CD4-positive, alpha-beta memory T cell (primary cell): ENCODE measurements at regions of chr2 and their contacts with region 1.

Region 1: DNA sequence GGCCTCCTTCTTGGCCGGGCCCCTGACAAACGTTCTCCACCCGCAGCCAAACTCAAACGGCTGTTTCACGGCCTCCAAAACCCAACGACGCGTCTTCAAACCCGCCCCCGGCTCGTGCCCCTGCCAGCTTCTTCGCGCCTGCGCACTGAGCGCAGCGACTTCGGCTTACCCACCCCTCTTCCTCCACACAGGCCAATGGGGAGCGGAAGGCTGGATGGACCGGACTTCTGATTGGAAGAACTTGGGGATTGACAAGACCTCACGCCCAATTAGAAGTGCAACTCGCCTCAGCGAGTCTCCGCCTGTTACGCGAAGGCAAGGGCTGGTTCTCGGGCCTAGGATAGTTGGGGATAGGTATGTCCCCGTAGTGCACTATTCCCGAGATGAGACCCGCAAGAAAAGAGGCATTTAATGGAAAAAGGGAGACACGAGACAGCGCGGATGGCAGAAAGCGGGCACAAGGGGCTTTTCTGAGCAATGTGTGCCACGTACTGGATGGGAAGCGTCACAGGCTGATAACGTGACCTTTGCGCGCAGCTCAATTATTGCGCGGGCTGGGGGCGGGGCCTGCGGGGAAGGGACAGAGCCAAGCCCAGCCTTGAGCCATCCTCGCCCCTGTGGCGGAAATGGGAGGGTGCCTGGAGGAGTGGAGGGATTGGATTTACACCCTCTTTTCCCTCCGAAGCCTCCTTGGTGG is at the start of gene LAPTM4A:
- DNase-seq: peak; percentile 97 to 99 (median 99)
- H3K4me3 ChIP-seq: peak within 1 kb of the TSS; percentile 76 to 90
- H3K4me3 Mint-ChIP-seq: no peak within 1 kb of the TSS
- H3K27ac ChIP-seq: peak within 1 kb of the TSS; percentile 94
- H3K27ac Mint-ChIP-seq: no peak within 1 kb of the TSS
- H3K4me1 ChIP-seq: peaks cover 35% of the 10 kb centered on the region
- H3K4me1 Mint-ChIP-seq: peaks cover 23 to 32% (median 26%) of the 10 kb centered on the region in 4 donors
- H3K27me3 ChIP-seq: peaks cover 8% of the 10 kb centered on the region
- H3K27me3 Mint-ChIP-seq: peaks cover 13 to 15% of the 10 kb centered on the region in 2 donors
- total RNA-seq, gene LAPTM4A: 47.4 to 50.8 TPM

Region 2: GRCh38 chr2:19863303-19864041 is 188.2 kb before region 1 on chr2:
- CTCF ChIA-PET with region 1: no interaction called
- POLR2A ChIA-PET with region 1: interaction called, 6 read pairs
- intact Hi-C with region 1: loop called (anchors 10 kb)
- DNase-seq: peak; percentile 58 to 70 (median 61)
- H3K4me3 ChIP-seq: no peak overlapping the region
- H3K4me3 Mint-ChIP-seq: no peak overlapping the region
- H3K27ac ChIP-seq: no peak overlapping the region
- H3K27ac Mint-ChIP-seq: peak overlapping the region in 1 of 7 donors; percentile 67
- H3K4me1 ChIP-seq: peaks cover 13% of the 10 kb centered on the region
- H3K4me1 Mint-ChIP-seq: peaks cover 4 to 18% (median 8%) of the 10 kb centered on the region in 4 donors
- H3K27me3 ChIP-seq: no peaks in the 10 kb centered on the region
- H3K27me3 Mint-ChIP-seq: peaks cover 1 to 5% of the 10 kb centered on the region in 2 donors

Region 3: DNA sequence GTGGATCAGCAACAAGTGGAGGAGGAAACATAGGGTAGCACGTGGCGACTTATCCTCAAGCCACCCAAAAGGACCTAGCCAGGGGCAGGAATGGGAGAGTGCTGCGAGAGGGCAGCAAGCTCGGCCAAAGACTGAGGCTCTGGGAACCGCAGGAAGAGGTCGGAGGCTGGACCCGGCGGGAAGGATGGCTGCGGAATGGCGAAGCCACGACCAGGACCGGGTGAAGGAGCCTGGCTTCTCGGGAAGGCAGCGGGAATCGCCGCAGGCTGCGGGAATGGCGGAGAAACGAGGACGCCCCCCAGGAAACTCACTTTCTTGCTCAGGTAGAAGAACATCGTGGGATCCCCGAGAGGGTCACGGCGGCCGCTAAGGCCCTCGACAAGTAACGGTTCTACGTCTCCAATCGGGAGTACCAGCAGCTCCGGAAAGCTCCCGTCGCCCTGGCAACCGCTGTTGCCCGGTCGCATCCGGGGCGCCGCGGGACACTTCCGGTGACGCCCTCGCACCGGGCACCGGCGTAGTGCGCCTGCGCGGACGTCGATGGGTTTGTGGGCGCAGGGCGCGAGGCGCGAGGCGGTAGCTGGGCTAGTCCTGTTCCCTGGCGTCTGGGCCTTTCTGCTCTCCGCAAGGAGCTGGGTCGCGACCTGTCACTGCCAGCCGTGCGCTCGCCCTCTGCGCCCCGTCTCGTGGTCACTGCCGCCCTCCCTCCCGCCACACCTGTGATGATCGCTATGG is 61.8 kb before region 1 on chr2 and contains the start of gene WDR35:
- CTCF ChIA-PET with region 1: interaction called, 5 read pairs
- POLR2A ChIA-PET with region 1: interaction called, 19 read pairs
- intact Hi-C with region 1: loop called (anchors 1 kb)
- DNase-seq: peak; percentile 80 to 89 (median 86)
- H3K4me3 ChIP-seq: peak within 1 kb of the TSS; percentile 57 to 68
- H3K4me3 Mint-ChIP-seq: peak within 1 kb of the TSS; percentile 86 to 96 (median 90)
- H3K27ac ChIP-seq: peak within 1 kb of the TSS; percentile 57
- H3K27ac Mint-ChIP-seq: peak within 1 kb of the TSS; percentile 77 to 95 (median 93)
- H3K4me1 ChIP-seq: peaks cover 16% of the 10 kb centered on the region
- H3K4me1 Mint-ChIP-seq: peaks cover 11 to 28% (median 21%) of the 10 kb centered on the region in 4 donors
- H3K27me3 ChIP-seq: no peaks in the 10 kb centered on the region
- H3K27me3 Mint-ChIP-seq: peaks cover 9 to 11% of the 10 kb centered on the region in 2 donors
- total RNA-seq, gene WDR35: 5.5 to 5.7 TPM

Region 4: GRCh38 chr2:20097879-20098714 is 46.4 kb after region 1 on chr2:
- CTCF ChIA-PET with region 1: no interaction called
- POLR2A ChIA-PET with region 1: no interaction called
- intact Hi-C with region 1: loop called (anchors 2 kb)
- DNase-seq: peak; percentile 65 to 72 (median 70)
- H3K4me3 ChIP-seq: no peak overlapping the region
- H3K4me3 Mint-ChIP-seq: no peak overlapping the region
- H3K27ac ChIP-seq: no peak overlapping the region
- H3K27ac Mint-ChIP-seq: peak overlapping the region in 1 of 7 donors; percentile 28
- H3K4me1 ChIP-seq: no peaks in the 10 kb centered on the region
- H3K4me1 Mint-ChIP-seq: peaks cover 0 to 4% (median 0%) of the 10 kb centered on the region in 4 donors
- H3K27me3 ChIP-seq: no peaks in the 10 kb centered on the region
- H3K27me3 Mint-ChIP-seq: peaks cover 10 to 14% of the 10 kb centered on the region in 2 donors

Region 5: DNA sequence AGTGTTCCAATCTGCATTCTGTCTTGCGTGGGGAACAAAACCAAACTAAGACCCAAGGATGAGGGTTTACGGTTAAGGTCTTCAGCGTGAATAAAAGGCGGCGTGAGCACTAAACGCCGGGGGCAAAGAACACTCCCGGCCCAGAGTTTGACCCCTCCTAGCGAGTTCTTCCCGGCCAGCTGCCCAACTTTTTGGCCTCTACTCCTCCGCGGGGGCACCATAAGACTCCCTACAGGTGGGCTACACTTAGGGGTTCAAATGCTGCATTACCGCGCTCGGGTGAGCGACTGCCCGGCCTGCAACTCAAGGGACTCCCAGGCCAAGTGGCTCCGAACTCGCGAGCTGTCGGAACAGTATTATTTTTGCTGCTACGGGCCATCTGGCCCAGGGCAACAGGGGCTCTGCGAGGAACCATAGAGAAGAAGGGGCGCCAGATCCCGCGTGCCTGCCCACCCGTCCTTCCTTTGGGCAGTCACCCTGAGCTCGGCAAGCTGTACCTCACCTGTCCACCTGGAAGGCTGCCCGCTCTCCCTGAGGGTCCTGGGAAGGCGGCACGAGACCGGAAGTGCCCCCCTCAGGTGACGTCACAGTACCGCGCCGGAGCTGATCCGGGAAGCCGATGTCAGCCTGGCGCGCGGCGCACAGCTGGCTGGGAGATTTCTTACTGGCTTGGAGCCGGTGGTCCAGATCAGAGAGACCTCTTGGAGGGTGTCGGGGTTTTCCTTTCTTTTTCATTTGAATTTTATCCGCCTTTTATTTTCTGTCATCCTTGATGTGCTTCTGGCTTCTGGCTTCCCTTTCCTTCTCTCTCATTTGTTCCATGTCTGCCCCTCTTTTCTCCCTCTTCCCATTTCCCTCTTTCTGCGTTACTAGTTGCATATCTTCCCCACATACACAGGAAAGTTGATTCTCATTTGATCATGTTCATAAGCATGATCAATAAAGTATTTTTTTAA is 771.1 kb after region 1 on chr2 and contains the start of gene LDAH:
- CTCF ChIA-PET with region 1: no interaction called
- POLR2A ChIA-PET with region 1: no interaction called
- intact Hi-C with region 1: loop called (anchors 10 kb)
- DNase-seq: peak; percentile 79 to 84 (median 82)
- H3K4me3 ChIP-seq: peak within 1 kb of the TSS; percentile 81 to 85
- H3K4me3 Mint-ChIP-seq: peak within 1 kb of the TSS; percentile 93 to 99 (median 98)
- H3K27ac ChIP-seq: peak within 1 kb of the TSS; percentile 83
- H3K27ac Mint-ChIP-seq: peak within 1 kb of the TSS; percentile 97 to 100 (median 98)
- H3K4me1 ChIP-seq: peaks cover 3% of the 10 kb centered on the region
- H3K4me1 Mint-ChIP-seq: peaks cover 15 to 36% (median 26%) of the 10 kb centered on the region in 4 donors
- H3K27me3 ChIP-seq: no peaks in the 10 kb centered on the region
- H3K27me3 Mint-ChIP-seq: no peaks in the 10 kb centered on the region
- total RNA-seq, gene LDAH: 22.7 to 23.9 TPM